Breast epithelium (tissue), 4 donors: ENCODE measurements at regions of chr6 and their contacts with region 1.

Region 1: GRCh38 chr6:36550473-36551000 is 3.3 kb upstream of the STK38 start:
- DNase-seq: no peak
- H3K4me3 ChIP-seq: no peak overlapping the region
- H3K27ac ChIP-seq: no peak overlapping the region
- H3K4me1 ChIP-seq: peaks cover 0 to 6% of the 10 kb centered on the region in 2 donors
- H3K27me3 ChIP-seq: no peaks in the 10 kb centered on the region
- CTCF ChIP-seq: no peak
- POLR2A ChIP-seq: no peak

Region 2: GRCh38 chr6:35688581-35689322 is 861.8 kb before region 1 on chr6 and contains the start of gene FKBP5:
- intact Hi-C with region 1: loop called (anchors 5 kb)
- DNase-seq: peak; percentile 93 to 95
- H3K4me3 ChIP-seq: peak within 1 kb of the TSS; percentile 76 to 99 (median 86)
- H3K27ac ChIP-seq: peak within 1 kb of the TSS; percentile 91 to 94
- H3K4me1 ChIP-seq: peaks cover 5 to 6% of the 10 kb centered on the region in 2 donors
- H3K27me3 ChIP-seq: no peaks in the 10 kb centered on the region
- CTCF ChIP-seq: peak in 1 of 3 donors; percentile 10
- POLR2A ChIP-seq: no peak
- total RNA-seq, gene FKBP5: 167 to 970 (median 266) TPM